ENCODE measurements at regions of chr2 and their contacts with region 1.

Region 1: DNA sequence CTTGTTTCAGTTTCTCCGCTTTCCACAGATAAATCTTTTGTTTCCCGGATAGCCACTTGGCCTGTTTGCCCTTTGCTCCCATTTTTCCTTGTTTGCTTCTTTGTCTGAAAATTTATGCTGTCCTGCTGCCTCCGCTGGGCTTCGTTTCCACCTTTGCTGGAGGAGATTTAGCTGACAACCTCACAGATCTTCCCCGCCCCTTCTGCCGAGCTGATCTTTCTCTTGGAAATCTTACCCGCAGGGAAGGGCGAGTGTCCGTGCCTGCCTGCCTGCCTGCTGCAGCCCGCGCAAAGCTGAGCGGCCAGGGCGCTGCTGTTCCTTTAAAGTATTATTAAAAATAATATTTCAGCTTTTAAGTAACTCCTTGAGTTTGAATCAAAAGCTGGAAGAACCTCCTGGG is 1.4 kb upstream of the XRCC5 start:
- DNase-seq: no peak
- H3K4me3 ChIP-seq: no peak overlapping the region
- H3K27ac ChIP-seq: no peak overlapping the region
- H3K4me1 ChIP-seq: no peaks in the 10 kb centered on the region
- H3K27me3 ChIP-seq: no peaks in the 10 kb centered on the region
- CTCF ChIP-seq: no peak

Region 2: GRCh38 chr2:215973954-215974702 is 133.6 kb before region 1 on chr2:
- intact Hi-C with region 1: no loop called
- DNase-seq: peak; percentile 40
- H3K4me3 ChIP-seq: no peak overlapping the region
- H3K27ac ChIP-seq: no peak overlapping the region
- H3K4me1 ChIP-seq: no peaks in the 10 kb centered on the region
- H3K27me3 ChIP-seq: no peaks in the 10 kb centered on the region
- CTCF ChIP-seq: no peak

Region 3: GRCh38 chr2:216023055-216023648 is 84.6 kb before region 1 on chr2:
- intact Hi-C with region 1: no loop called
- DNase-seq: peak; percentile 58
- H3K4me3 ChIP-seq: no peak overlapping the region
- H3K27ac ChIP-seq: no peak overlapping the region
- H3K4me1 ChIP-seq: no peaks in the 10 kb centered on the region
- H3K27me3 ChIP-seq: no peaks in the 10 kb centered on the region
- CTCF ChIP-seq: peak; percentile 46

Region 4: GRCh38 chr2:216081487-216082116 is 26.2 kb before region 1 on chr2 and contains the starts of genes PECR and TMEM169:
- intact Hi-C with region 1: loop called (anchors 2 kb)
- DNase-seq: peak; percentile 92
- H3K4me3 ChIP-seq: peak within 1 kb of the TSS; percentile 76
- H3K27ac ChIP-seq: no peak within 1 kb of the TSS
- H3K4me1 ChIP-seq: peaks cover 3% of the 10 kb centered on the region
- H3K27me3 ChIP-seq: no peaks in the 10 kb centered on the region
- CTCF ChIP-seq: no peak
- total RNA-seq, gene PECR: 15.9 to 22.5 TPM
- total RNA-seq, gene TMEM169: 0.15 to 0.21 TPM

Measured in colonic mucosa (tissue), 4 donors.